ENCODE measurements at regions of chr13 and their contacts with region 1.

Region 1: DNA sequence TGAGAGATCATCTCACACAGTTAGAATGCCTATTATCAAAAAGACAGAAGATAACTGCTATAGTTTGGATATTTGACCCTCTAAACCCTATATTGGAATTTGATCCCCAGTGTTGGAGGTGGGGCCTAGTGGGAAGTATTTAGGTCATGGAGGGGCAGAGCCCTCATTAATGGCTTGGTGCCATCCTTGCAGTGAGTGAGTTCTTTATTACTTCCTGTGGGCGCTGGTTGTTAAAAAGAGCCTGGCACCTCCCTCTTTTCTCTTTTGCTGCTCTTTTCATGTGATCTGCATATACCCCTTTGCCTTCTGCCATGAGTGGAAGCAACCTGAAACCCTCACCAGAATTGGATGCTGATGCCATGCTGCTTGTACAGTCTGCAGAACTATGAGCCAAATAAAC is 66.8 kb downstream of the TDRD3 start:
- DNase-seq: no peak
- H3K4me3 ChIP-seq: no peak overlapping the region
- H3K27ac ChIP-seq: no peak overlapping the region
- H3K4me1 ChIP-seq: no peaks in the 10 kb centered on the region
- H3K27me3 ChIP-seq: no peaks in the 10 kb centered on the region
- CTCF ChIP-seq: no peak
- EP300 ChIP-seq: no peak
- POLR2A ChIP-seq: no peak
- RAD21 ChIP-seq: no peak

Region 2: DNA sequence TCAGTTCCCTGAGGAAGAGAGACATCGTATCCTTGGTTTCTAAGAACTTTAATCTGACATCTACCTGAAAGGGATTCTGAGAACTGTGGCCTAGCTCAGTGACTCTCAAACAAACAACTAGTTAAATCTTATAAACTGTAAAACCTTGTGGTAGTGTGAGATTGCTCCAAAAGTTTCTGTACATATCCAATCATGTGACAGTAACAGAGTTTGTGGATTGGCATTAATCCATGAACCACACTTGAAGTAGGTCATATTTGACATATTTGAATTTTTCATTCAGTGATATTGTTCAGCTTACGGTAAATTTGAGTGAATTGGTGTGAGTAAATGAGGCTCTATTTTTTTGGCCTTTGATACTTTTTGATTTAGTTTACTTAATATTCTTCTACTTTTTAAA is 51.8 kb before region 1 on chr13:
- CTCF ChIA-PET with region 1: no interaction called
- POLR2A ChIA-PET with region 1: no interaction called
- DNase-seq: no peak
- H3K4me3 ChIP-seq: no peak overlapping the region
- H3K27ac ChIP-seq: no peak overlapping the region
- H3K4me1 ChIP-seq: no peaks in the 10 kb centered on the region
- H3K27me3 ChIP-seq: no peaks in the 10 kb centered on the region
- CTCF ChIP-seq: no peak
- EP300 ChIP-seq: no peak
- POLR2A ChIP-seq: no peak
- RAD21 ChIP-seq: no peak

Region 3: DNA sequence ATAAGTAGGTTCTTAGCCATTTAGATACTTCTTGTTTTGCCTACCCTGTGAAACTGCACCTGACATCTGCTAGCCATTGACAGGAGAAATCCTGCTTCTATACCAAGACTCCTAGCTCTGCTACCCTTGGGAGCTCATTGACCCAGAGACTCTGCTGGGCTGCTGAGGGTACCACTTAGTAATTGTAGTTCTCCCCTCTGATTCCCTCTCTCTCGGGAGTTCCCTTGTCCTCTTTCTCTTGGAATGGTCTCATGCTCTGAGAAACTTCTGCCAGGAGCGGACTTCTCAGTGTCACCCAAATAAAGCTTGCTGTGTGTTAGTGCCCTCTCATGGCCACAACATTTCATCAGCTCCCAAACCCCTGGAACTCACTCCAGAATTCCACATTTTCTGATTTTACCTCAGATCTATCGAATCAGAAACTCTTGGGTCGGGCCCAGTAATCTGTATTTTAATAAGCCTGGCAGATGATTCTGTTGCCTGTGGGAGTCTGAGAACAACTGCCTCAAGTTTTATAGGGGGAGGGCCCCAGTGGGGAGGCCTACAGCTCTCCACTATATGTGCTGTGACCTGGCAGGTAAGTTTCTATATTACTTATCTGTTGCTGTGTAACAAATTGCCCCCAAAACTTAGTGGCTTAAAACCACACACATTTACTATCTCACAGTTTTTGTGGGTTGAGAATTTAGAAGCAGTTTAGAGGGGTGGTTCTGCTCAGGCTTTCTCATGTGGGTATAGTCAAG is 154.4 kb after region 1 on chr13:
- CTCF ChIA-PET with region 1: interaction called, 18 read pairs
- POLR2A ChIA-PET with region 1: no interaction called
- DNase-seq: peak; percentile 31 to 54
- H3K4me3 ChIP-seq: no peak overlapping the region
- H3K27ac ChIP-seq: no peak overlapping the region
- H3K4me1 ChIP-seq: peaks cover 0 to 4% (median 0%) of the 10 kb centered on the region in 4 experiments; a peak in 2 of 7 replicates
- H3K27me3 ChIP-seq: no peaks in the 10 kb centered on the region
- CTCF ChIP-seq: peak; percentile 20 to 95 (median 73)
- EP300 ChIP-seq: no peak
- POLR2A ChIP-seq: no peak
- RAD21 ChIP-seq: peak; percentile 95 to 97

Measured in H1 (cell line).